Caco-2 (cell line): ENCODE measurements at regions of chr9 and their contacts with region 1.

Region 1: GRCh38 chr9:136711751-136712689 is at the start of gene DIPK1B:
- DNase-seq: peak; percentile 41 to 59
- H3K4me3 ChIP-seq: peak within 1 kb of the TSS; percentile 85
- H3K4me3 Mint-ChIP-seq: peak within 1 kb of the TSS; percentile 66
- H3K27ac Mint-ChIP-seq: no peak within 1 kb of the TSS
- H3K4me1 ChIP-seq: peaks cover 11% of the 10 kb centered on the region
- H3K4me1 Mint-ChIP-seq: peaks cover 15% of the 10 kb centered on the region
- H3K27me3 ChIP-seq: no peaks in the 10 kb centered on the region
- H3K27me3 Mint-ChIP-seq: no peaks in the 10 kb centered on the region
- CTCF ChIP-seq: no peak
- total RNA-seq, gene DIPK1B: 40.4 and 40.6 TPM in 2 replicates

Region 2: DNA sequence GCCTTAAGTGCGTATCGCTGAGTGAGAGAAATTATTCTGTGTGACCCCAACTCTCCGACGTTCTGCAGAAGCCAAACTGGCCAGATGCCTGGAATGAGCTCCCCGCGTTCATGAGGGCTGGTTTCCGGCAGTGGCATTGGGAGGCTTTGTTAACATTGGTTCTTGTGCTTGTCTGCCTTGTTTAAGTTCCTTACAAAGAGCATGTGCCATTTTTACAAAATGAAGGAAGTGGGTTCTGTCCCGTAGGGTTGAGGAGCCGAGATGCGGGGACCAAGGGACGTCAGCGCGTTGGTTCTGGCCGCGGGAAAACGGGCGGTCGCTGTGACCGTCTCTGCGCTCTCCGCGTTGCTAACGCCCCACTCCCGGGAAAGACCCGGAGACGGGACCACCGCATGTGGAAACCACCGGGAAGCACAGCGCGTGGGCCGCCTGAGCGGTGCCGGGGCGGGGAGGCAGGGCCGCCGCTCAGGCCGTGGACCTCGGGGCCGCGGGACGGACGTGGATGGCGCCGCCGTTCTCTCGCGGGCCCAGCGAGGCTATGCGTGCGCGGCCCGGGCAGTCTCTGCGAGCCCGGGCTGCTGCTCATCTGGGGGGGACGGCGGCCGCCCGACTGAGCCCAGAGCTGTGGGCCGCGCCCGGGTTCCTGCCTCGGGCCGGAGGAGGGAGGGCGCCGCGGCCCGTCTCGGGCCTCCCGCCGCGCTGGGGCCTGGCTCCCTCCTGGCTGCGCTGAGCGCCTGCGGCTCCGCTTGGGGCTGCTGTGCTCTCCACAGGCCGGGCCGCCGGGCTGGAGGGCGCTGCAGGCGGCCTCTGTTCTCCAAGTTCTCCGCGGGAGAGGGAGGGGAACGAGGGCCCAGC is 109.2 kb after region 1 on chr9:
- CTCF ChIA-PET with region 1: no interaction called
- POLR2A ChIA-PET with region 1: no interaction called
- intact Hi-C with region 1: no loop called
- DNase-seq: no peak
- H3K4me3 ChIP-seq: no peak overlapping the region
- H3K4me3 Mint-ChIP-seq: no peak overlapping the region
- H3K27ac Mint-ChIP-seq: no peak overlapping the region
- H3K4me1 ChIP-seq: no peaks in the 10 kb centered on the region
- H3K4me1 Mint-ChIP-seq: no peaks in the 10 kb centered on the region
- H3K27me3 ChIP-seq: no peaks in the 10 kb centered on the region
- H3K27me3 Mint-ChIP-seq: no peaks in the 10 kb centered on the region
- CTCF ChIP-seq: no peak

Region 3: DNA sequence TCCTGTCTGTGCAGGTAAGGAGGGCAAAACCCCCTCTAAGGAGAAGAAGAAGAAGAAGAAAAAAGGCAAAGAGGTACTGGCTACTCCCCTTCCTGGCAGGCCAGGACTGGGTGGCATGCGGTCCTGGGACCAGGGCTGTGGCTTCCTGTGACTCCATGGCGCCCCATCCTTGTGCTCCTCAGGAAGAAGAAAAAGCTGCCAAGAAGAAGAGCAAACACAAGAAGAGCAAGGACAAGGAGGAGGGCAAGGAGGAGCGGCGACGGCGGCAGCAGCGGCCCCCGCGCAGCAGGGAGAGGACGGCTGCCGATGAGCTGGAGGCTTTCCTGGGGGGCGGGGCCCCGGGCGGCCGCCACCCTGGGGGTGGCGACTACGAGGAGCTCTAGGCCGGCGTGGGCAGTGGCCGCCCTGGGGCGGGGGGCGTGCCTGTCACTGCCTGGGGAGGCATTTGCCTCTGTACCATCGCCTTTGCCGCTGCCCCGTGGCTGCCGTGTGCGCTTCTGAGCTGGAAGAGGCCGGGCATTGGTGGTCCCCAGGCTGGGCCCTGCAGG is 128.2 kb after region 1 on chr9:
- CTCF ChIA-PET with region 1: no interaction called
- POLR2A ChIA-PET with region 1: interaction called, 16 read pairs
- intact Hi-C with region 1: no loop called
- DNase-seq: no peak
- H3K4me3 ChIP-seq: no peak overlapping the region
- H3K4me3 Mint-ChIP-seq: peak overlapping the region; percentile 7
- H3K27ac Mint-ChIP-seq: peak overlapping the region; percentile 22
- H3K4me1 ChIP-seq: peaks cover 25% of the 10 kb centered on the region
- H3K4me1 Mint-ChIP-seq: peaks cover 8% of the 10 kb centered on the region
- H3K27me3 ChIP-seq: no peaks in the 10 kb centered on the region
- H3K27me3 Mint-ChIP-seq: no peaks in the 10 kb centered on the region
- CTCF ChIP-seq: no peak